Heart left ventricle (tissue), 16 donors: ENCODE measurements at regions of chr2 and their contacts with region 1.

Region 1: DNA sequence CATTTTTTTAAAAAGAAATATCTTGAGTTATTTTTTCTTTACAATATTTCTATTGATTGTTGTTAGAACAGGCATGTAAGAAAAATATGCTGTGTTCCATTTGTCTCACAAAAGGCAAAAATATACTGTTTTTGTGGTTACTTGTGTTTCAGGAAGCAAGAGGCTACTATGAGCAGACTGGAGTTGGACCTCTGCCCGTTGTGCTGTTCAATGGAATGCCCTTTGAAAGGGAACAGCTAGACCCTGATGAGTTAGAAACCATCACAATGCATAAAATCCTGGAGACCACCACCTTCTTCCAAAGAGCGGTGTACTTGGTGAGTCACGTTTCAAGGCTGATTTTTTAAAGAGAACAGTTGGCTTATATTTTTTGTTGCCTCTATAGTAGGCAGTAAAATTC is 54.7 kb downstream of the UGGT1 start:
- DNase-seq: no peak
- ATAC-seq: no peak
- H3K4me3 ChIP-seq: no peak overlapping the region
- H3K27ac ChIP-seq: no peak overlapping the region
- H3K4me1 ChIP-seq: peaks cover 0 to 5% (median 0%) of the 10 kb centered on the region in 12 donors
- H3K27me3 ChIP-seq: no peaks in the 10 kb centered on the region
- CTCF ChIP-seq: no peak
- POLR2A ChIP-seq: no peak

Region 2: DNA sequence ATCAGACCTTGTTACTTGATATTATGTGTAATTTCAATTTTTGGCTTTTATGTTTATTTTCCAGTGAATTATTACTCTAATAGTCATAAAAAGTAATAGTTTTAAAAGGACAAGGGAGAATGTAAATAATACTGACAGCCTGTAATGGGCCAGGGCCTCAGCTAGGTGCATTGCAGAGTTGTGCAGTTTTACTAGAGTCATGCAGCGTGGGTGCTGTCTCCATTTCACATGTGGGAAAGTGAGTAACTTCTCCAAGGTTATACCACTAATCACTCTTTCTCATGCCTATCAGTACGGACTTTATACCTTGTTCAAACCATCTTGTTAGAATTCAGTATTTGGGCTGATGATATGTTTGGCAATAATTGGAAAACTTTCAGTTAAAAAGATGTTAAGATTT is 18.7 kb after region 1 on chr2:
- intact Hi-C with region 1: loop called in 1 of 10 experiments (anchors 2 kb)
- DNase-seq: no peak
- ATAC-seq: no peak
- H3K4me3 ChIP-seq: no peak overlapping the region
- H3K27ac ChIP-seq: no peak overlapping the region
- H3K4me1 ChIP-seq: peaks cover 0 to 9% (median 0%) of the 10 kb centered on the region in 12 donors
- H3K27me3 ChIP-seq: no peaks in the 10 kb centered on the region
- CTCF ChIP-seq: no peak
- POLR2A ChIP-seq: no peak

Region 3: DNA sequence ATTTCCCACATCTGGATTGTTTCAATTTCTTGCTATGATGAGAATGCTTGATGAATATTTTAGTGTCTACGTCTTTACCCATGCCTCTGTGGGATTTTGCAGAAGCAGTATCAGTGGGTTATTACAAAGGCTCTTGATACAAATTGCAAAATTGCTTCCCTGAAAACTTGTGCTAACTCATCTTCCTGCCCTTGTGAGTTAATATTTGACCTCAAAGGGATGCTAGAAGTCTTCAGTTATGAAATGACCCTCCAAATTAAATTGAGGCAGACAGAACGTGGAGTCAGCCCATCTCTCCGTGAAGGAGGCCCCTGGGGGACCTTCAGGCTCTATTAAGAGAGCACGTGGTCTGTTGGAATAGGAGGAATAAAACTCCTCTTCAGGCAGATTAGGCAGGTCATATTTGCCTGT is 412.2 kb after region 1 on chr2:
- intact Hi-C with region 1: no loop called
- DNase-seq: no peak
- ATAC-seq: peak in 2 of 4 donors; percentile 39 to 79
- H3K4me3 ChIP-seq: no peak overlapping the region
- H3K27ac ChIP-seq: no peak overlapping the region
- H3K4me1 ChIP-seq: peaks cover 0 to 6% (median 0%) of the 10 kb centered on the region in 12 donors
- H3K27me3 ChIP-seq: no peaks in the 10 kb centered on the region
- CTCF ChIP-seq: no peak
- POLR2A ChIP-seq: no peak